CD4-positive, alpha-beta memory T cell (primary cell): ENCODE measurements at regions of chr15 and their contacts with region 1.

Region 1: DNA sequence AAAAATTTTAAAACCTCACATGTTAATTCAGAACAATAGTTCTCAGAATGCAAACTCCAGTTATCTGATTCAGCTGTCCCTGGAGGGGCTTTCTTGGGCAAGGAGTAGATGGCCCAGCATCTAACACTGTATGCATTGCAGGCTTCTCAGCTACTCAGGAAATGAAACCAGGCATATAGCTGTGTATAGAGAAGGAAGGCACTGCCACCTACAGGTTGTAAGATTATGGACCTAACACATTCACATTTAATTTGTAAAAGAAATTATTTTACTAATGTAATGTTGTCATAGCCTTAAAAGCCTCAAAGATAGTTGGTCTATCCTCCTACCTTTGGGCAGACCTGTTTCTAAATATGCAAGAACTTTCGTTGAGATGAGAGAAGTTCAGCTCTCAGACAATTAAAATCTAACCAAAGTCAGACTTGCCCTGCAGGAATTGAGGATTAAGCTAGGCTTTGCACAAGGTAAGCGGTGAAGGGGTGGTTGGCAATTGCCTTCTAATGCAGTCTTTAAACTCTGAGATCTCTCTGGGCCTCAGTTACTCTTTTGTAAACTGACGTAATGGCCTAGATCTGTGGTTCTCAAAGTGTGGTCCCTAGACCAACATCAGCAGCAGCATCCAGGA is 132.8 kb upstream of the SLC24A5 start:
- DNase-seq: peak in 2 of 5 donors; percentile 2 to 5
- H3K4me3 ChIP-seq: no peak overlapping the region
- H3K4me3 Mint-ChIP-seq: no peak overlapping the region
- H3K27ac ChIP-seq: no peak overlapping the region
- H3K27ac Mint-ChIP-seq: no peak overlapping the region
- H3K4me1 ChIP-seq: no peaks in the 10 kb centered on the region
- H3K4me1 Mint-ChIP-seq: no peaks in the 10 kb centered on the region
- H3K27me3 ChIP-seq: no peaks in the 10 kb centered on the region
- H3K27me3 Mint-ChIP-seq: peaks cover 2 to 3% of the 10 kb centered on the region in 2 donors

Region 2: GRCh38 chr15:47196057-47196456 is 792.0 kb before region 1 on chr15:
- CTCF ChIA-PET with region 1: no interaction called
- POLR2A ChIA-PET with region 1: no interaction called
- intact Hi-C with region 1: loop called (anchors 5 kb)
- DNase-seq: peak; percentile 3 to 37 (median 8)
- H3K4me3 ChIP-seq: no peak overlapping the region
- H3K4me3 Mint-ChIP-seq: no peak overlapping the region
- H3K27ac ChIP-seq: no peak overlapping the region
- H3K27ac Mint-ChIP-seq: no peak overlapping the region
- H3K4me1 ChIP-seq: no peaks in the 10 kb centered on the region
- H3K4me1 Mint-ChIP-seq: no peaks in the 10 kb centered on the region
- H3K27me3 ChIP-seq: no peaks in the 10 kb centered on the region
- H3K27me3 Mint-ChIP-seq: no peaks in the 10 kb centered on the region